BJ (cell line): ENCODE measurements at regions of chr4 and their contacts with region 1.

Region 1: DNA sequence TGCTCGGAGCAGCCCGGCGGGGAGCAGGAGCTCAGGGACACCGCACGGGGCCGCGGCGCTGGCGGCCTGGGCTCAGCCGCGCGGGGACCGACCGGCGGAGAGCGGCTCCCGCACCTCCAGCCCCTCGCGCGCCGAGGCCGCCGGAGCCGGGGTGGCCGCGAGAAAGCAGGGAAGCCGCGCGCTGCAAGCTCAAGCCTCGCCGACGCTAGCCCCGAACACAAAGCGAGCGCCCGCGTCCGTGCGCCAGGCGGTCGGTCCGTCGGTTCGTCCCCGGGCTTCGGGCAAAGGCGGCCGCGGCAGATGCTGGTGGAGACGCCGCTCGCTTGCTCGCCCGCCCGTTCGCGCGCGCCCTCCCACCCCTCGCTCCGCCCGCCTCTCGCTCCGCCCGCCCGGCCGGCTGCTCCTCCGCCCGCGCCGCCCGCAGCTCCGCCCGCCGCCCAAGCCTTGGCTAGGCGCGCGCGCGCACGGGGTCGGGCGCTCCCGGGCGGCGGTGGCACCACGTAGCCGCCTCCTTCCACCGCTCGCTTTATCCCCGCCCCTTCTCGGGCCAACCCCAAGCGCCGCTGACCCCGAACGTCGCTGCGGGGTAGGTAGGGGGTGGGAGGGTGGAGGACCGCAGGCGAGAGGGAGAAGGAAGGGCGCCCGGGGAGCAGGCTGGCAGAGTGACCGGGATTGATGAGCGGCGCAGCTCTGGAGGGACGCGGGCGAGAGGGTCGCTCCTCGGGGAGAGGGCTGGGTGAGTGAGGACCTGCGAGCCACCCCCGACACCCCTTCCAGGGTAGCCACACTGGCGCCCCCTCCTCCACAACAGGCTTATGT is at the start of gene TSPAN5:
- DNase-seq: no peak
- H3K4me3 ChIP-seq: peak within 1 kb of the TSS; percentile 75
- H3K27me3 ChIP-seq: no peaks in the 10 kb centered on the region
- CTCF ChIP-seq: no peak
- polyA plus RNA-seq, gene TSPAN5: 74.5 and 96.5 TPM in 2 replicates

Region 2: DNA sequence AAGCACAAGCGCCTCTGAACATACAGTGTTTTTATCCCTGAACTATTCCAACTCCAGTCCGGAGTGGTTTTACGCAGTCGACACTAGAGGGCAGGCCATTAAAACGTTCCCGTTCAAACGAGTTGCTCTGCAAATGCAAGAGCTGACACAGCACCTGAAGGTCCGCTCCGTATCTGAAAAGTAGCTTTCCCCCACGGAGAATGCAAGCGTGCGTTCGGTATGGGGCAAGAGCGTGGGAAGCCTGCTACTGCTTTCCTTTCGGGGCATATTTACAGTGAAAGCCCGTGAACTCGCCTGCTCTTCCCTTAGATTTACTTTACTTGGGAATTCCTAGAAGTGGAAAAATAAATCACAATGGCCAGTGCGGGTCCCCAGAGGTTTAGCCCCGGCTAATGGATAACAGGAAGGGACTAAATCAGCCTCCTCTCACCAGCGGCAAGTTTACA is 190.8 kb before region 1 on chr4:
- CTCF ChIA-PET with region 1: interaction called, 10 read pairs
- POLR2A ChIA-PET with region 1: no interaction called
- DNase-seq: peak; percentile 61
- H3K4me3 ChIP-seq: peak overlapping the region; percentile 4
- H3K27me3 ChIP-seq: no peaks in the 10 kb centered on the region
- CTCF ChIP-seq: peak; percentile 81

Region 3: GRCh38 chr4:98555798-98556445 is 102.6 kb before region 1 on chr4:
- CTCF ChIA-PET with region 1: no interaction called
- POLR2A ChIA-PET with region 1: no interaction called
- DNase-seq: no peak
- H3K4me3 ChIP-seq: no peak overlapping the region
- H3K27me3 ChIP-seq: no peaks in the 10 kb centered on the region
- CTCF ChIP-seq: no peak

Region 4: DNA sequence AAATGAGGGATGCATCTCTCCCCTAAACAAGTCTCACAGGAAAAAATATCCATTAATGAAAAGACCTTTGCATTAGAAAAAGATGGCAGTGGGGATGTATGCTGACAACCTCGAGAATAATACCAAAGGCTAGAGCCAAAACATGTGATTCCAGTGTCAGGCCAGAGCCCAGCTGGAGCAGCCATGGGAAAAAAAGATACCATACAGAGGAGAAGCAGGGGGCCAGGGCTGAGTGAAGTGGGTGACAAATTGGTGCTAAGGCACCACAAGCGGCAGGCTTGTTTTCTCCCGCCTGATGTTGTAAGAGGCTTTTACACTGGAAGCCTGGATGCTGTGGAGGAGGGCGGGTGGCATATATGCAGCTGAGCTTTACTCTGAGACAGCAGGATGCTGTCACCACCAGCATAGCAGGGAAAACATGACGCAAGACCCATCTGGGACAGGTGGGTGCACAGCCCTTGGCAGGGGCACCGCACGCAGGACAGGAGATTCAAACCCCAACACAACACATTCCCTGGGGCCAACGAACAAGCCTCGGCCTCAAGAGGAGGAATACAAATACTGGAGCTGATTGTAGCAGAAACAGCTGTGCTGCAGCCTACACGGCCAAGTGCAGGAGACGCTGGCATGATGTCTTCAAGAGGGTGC is 92.0 kb before region 1 on chr4:
- CTCF ChIA-PET with region 1: no interaction called
- POLR2A ChIA-PET with region 1: interaction called, 18 read pairs
- DNase-seq: no peak
- H3K4me3 ChIP-seq: no peak overlapping the region
- H3K27me3 ChIP-seq: no peaks in the 10 kb centered on the region
- CTCF ChIP-seq: no peak